ENCODE measurements at regions of chr2 and their contacts with region 1.

Region 1: GRCh38 chr2:37361216-37361815 is 16.9 kb downstream of the QPCT start:
- DNase-seq: peak; percentile 11 to 72
- ATAC-seq: peak; percentile 83 to 93 (median 87)
- H3K4me3 ChIP-seq: no peak overlapping the region
- H3K27ac ChIP-seq: peak overlapping the region; percentile 76
- H3K4me1 ChIP-seq: peaks cover 20% of the 10 kb centered on the region
- H3K27me3 ChIP-seq: no peaks in the 10 kb centered on the region
- CTCF ChIP-seq: no peak

Region 2: GRCh38 chr2:37324786-37325624 is 36.3 kb before region 1 on chr2 and contains the start of gene PRKD3:
- intact Hi-C with region 1: loop called in 1 of 2 experiments (anchors 5 kb)
- DNase-seq: peak; percentile 51 to 77
- ATAC-seq: peak; percentile 87 to 91 (median 88)
- H3K4me3 ChIP-seq: peak within 1 kb of the TSS; percentile 94
- H3K27ac ChIP-seq: peak within 1 kb of the TSS; percentile 94
- H3K4me1 ChIP-seq: peaks cover 20% of the 10 kb centered on the region
- H3K27me3 ChIP-seq: no peaks in the 10 kb centered on the region
- CTCF ChIP-seq: no peak
- total RNA-seq, gene PRKD3: 17.1 to 21.4 (median 18.8) TPM

Region 3: DNA sequence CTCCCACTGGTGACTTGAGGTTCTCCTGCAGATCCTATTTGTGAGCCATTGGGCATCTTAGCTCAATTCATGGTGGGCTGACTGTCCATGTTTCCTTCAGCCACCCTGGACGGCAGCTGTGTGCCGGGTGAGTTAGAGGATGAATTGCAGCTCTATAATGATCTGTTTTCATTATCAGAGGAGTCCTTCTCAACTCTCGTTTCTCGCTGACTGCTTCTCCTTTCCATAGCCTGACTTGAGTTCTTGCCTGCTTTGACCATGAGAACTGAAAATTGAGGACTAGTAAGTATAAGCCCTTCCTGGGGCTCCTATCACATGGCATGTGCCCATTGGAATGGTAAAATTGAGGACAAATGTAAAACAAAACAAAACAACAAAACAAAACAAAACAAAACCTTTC is 188.3 kb after region 1 on chr2:
- intact Hi-C with region 1: no loop called
- DNase-seq: no peak
- ATAC-seq: no peak
- H3K4me3 ChIP-seq: no peak overlapping the region
- H3K27ac ChIP-seq: no peak overlapping the region
- H3K4me1 ChIP-seq: no peaks in the 10 kb centered on the region
- H3K27me3 ChIP-seq: no peaks in the 10 kb centered on the region
- CTCF ChIP-seq: no peak

Region 4: DNA sequence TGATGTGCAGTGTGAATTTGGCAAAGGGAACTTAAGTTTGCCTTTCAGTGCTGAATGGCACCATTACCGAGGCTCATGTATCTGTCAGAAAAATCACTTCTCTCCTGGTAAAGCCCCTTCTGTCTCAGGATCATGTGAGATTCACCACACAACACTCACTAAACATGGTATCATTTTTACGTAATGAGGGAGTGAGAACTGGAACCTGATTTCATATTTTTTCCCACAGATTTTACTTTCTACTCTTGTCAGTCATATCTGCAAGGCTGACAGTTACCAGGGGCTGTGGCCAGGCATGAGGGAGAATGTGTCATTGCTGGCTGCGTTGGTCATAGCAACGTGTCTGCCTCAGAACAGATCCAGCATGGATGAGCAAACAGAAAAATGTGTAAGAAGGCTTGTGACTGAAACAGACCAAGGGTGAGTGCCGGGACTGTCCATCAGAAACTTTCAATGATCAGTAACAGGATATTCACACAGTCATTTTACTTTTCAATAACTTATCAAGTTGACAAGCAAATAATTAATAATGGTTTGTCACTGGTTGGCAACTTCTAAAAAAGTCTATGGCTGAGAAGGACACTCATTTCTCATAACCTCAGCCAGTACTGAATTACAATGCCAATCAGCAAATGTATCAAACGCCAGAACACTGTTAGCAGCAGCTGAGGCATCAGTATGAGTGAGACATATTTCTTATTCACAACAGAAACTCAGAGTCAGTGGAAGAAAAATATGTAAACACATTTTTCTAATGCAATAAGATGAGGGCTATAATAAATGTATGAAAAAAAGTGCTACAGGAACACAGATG is 209.7 kb after region 1 on chr2:
- intact Hi-C with region 1: no loop called
- DNase-seq: peak; percentile 28 to 60
- ATAC-seq: peak; percentile 87 to 92 (median 90)
- H3K4me3 ChIP-seq: no peak overlapping the region
- H3K27ac ChIP-seq: peak overlapping the region; percentile 42
- H3K4me1 ChIP-seq: peaks cover 16% of the 10 kb centered on the region
- H3K27me3 ChIP-seq: no peaks in the 10 kb centered on the region
- CTCF ChIP-seq: no peak

Measured in psoas muscle (tissue), 8 donors.